Activated CD8-positive, alpha-beta T cell treated with anti-CD3 and anti-CD28 coated beads, Interleukin-2, amount 10 ng/mL, durations not matched to agents 7 days and 5 days (primary cell): ENCODE measurements at regions of chr20 and their contacts with region 1.

Region 1: GRCh38 chr20:35092524-35093266 is at the start of gene TRPC4AP:
- DNase-seq: peak; percentile 91
- ATAC-seq: peak; percentile 96
- H3K4me3 Mint-ChIP-seq: peak within 1 kb of the TSS; percentile 79
- H3K27ac Mint-ChIP-seq: peak within 1 kb of the TSS; percentile 91
- H3K4me1 Mint-ChIP-seq: peaks cover 46% of the 10 kb centered on the region
- H3K27me3 Mint-ChIP-seq: no peaks in the 10 kb centered on the region
- total RNA-seq, gene TRPC4AP: 43.2 to 44.6 TPM

Region 2: GRCh38 chr20:35066194-35066593 is 26.5 kb before region 1 on chr20:
- CTCF ChIA-PET with region 1: interaction called, 10 read pairs
- POLR2A ChIA-PET with region 1: no interaction called
- DNase-seq: no peak
- ATAC-seq: no peak
- H3K4me3 Mint-ChIP-seq: no peak overlapping the region
- H3K27ac Mint-ChIP-seq: no peak overlapping the region
- H3K4me1 Mint-ChIP-seq: peaks cover 32% of the 10 kb centered on the region
- H3K27me3 Mint-ChIP-seq: no peaks in the 10 kb centered on the region

Region 3: DNA sequence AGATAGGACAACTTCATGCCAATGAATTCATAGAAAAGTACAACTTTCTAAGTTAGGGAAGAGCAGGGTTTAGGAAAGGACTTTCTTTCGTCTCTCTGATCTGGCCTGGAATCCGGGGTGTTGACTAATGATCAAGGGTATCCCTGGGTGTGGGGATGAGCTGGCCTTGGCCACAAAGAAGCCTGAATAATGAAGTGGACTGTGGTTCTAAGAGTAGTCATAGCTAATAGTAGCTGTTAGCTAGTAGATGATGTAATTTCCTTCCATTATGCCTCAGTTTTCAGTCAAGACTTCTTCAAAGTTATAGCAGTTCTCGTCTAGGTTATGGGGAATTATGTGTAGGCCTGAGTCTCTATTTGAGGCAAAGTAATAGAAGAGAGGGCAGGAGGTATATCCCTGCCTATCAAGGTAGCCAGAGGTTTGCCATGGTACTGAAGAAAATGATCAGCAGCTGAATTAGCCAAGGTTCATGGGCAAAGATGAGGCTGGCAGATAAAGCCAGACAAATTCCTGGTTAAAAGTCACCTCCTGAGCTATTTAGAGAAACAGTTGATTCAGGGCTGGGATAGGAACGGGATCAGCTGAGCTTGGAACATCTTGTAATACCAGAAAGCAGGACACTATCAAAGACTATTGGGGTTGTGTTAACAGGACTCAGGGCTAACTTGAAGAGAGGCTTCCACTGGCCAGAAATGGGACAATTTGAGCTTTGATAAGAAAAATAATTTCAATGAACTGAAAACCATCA is 18.6 kb after region 1 on chr20:
- CTCF ChIA-PET with region 1: interaction called, 11 read pairs
- POLR2A ChIA-PET with region 1: no interaction called
- DNase-seq: no peak
- ATAC-seq: no peak
- H3K4me3 Mint-ChIP-seq: no peak overlapping the region
- H3K27ac Mint-ChIP-seq: no peak overlapping the region
- H3K4me1 Mint-ChIP-seq: no peaks in the 10 kb centered on the region
- H3K27me3 Mint-ChIP-seq: peaks cover 2% of the 10 kb centered on the region

Region 4: GRCh38 chr20:35207950-35208611 is 115.4 kb after region 1 on chr20:
- CTCF ChIA-PET with region 1: interaction called, 29 read pairs
- POLR2A ChIA-PET with region 1: no interaction called
- DNase-seq: peak; percentile 88
- ATAC-seq: peak; percentile 94
- H3K4me3 Mint-ChIP-seq: no peak overlapping the region
- H3K27ac Mint-ChIP-seq: no peak overlapping the region
- H3K4me1 Mint-ChIP-seq: no peaks in the 10 kb centered on the region
- H3K27me3 Mint-ChIP-seq: no peaks in the 10 kb centered on the region

Region 5: GRCh38 chr20:35269055-35269781 is 176.5 kb after region 1 on chr20:
- CTCF ChIA-PET with region 1: interaction called, 32 read pairs
- POLR2A ChIA-PET with region 1: interaction called, 3 read pairs
- DNase-seq: peak; percentile 67
- ATAC-seq: peak; percentile 72
- H3K4me3 Mint-ChIP-seq: no peak overlapping the region
- H3K27ac Mint-ChIP-seq: no peak overlapping the region
- H3K4me1 Mint-ChIP-seq: peaks cover 10% of the 10 kb centered on the region
- H3K27me3 Mint-ChIP-seq: no peaks in the 10 kb centered on the region